PC-9 (cell line): ENCODE measurements at regions of chr4 and their contacts with region 1.

Region 1: GRCh38 chr4:10063544-10064300 is 42.4 kb upstream of the SLC2A9 start:
- DNase-seq: peak; percentile 35 to 44
- H3K4me3 ChIP-seq: no peak overlapping the region
- H3K27ac ChIP-seq: no peak overlapping the region
- H3K4me1 ChIP-seq: no peaks in the 10 kb centered on the region
- H3K27me3 ChIP-seq: no peaks in the 10 kb centered on the region
- CTCF ChIP-seq: peak; percentile 49

Region 2: DNA sequence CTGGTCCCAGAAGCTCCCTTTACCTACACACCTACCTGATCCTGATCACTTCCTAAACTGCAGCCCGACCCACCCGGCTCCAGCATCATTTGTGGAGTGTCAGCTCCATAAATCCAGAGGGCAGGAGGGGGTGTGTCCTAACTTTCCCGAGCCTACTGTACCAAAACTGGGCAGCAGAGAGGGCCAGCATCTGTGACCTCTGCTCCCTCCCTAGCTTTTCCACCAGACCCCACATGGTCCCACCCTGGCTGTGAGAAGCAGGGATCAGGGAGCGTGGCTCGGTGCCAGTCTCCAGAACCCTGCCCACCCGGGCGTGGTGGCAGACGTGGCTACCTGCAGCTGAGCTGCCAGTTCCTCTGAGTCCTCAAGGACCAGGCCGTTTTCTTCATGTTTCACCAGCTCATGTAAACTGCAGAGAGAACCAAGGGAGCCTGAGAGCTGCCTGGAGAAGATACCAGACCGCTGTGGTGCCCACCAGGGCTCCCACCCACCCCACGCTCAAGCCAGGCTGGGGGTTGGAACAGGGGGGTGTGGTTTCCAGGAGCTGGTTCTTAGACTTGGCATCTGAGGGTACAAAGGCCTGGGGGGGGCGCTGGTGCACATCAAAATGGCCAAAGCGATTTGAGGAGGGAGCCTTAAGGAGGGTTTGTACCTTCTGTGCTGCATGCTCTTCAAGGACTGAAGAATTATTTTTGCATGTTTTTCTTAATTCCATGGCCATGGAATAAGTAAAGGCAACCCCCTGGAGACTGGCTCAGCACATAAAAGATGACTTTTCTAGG is 359.0 kb before region 1 on chr4:
- CTCF ChIA-PET with region 1: no interaction called
- POLR2A ChIA-PET with region 1: no interaction called
- intact Hi-C with region 1: loop called (anchors 5 kb)
- DNase-seq: no peak
- H3K4me3 ChIP-seq: no peak overlapping the region
- H3K27ac ChIP-seq: no peak overlapping the region
- H3K4me1 ChIP-seq: no peaks in the 10 kb centered on the region
- H3K27me3 ChIP-seq: no peaks in the 10 kb centered on the region
- CTCF ChIP-seq: no peak